ENCODE measurements at regions of chr22 and their contacts with region 1.

Region 1: DNA sequence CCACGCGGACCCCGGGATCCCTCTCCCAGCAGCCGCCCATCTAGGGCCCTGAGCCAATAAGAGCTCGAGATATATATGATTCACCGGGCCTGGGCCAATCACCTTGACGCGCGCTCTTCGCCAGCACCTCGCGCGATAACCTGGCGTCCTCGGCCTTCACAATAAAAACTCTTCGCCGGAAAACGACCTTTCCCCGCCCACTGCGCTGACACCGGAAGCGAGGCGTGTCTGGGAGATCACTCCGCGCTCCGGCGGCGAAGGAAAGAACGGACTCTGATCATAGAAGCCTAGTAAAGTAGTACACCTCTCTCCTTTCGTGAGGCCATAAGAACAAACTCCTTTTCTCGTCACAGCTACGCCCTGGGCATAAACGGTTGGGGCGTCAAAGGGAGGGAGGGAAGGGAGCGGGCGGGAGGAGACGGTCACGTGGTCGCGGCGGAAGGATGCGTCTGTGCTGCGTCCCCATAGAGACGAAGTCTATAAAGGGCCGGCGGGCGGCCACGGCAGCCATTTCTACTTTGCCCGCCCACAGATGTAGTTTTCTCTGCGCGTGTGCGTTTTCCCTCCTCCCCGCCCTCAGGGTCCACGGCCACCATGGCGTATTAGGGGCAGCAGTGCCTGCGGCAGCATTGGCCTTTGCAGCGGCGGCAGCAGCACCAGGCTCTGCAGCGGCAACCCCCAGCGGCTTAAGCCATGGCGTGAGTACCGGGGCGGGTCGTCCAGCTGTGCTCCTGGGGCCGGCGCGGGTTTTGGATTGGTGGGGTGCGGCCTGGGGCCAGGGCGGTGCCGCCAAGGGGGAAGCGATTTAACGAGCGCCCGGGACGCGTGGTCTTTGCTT is at the start of gene ATF4:
- DNase-seq: peak; percentile 99
- ATAC-seq: peak; percentile 89
- H3K4me3 Mint-ChIP-seq: peak within 1 kb of the TSS; percentile 89
- H3K27ac Mint-ChIP-seq: peak within 1 kb of the TSS; percentile 98
- H3K4me1 Mint-ChIP-seq: peaks cover 57% of the 10 kb centered on the region
- H3K27me3 Mint-ChIP-seq: no peaks in the 10 kb centered on the region
- CTCF ChIP-seq: no peak
- total RNA-seq, gene ATF4: 518 to 536 TPM

Region 2: DNA sequence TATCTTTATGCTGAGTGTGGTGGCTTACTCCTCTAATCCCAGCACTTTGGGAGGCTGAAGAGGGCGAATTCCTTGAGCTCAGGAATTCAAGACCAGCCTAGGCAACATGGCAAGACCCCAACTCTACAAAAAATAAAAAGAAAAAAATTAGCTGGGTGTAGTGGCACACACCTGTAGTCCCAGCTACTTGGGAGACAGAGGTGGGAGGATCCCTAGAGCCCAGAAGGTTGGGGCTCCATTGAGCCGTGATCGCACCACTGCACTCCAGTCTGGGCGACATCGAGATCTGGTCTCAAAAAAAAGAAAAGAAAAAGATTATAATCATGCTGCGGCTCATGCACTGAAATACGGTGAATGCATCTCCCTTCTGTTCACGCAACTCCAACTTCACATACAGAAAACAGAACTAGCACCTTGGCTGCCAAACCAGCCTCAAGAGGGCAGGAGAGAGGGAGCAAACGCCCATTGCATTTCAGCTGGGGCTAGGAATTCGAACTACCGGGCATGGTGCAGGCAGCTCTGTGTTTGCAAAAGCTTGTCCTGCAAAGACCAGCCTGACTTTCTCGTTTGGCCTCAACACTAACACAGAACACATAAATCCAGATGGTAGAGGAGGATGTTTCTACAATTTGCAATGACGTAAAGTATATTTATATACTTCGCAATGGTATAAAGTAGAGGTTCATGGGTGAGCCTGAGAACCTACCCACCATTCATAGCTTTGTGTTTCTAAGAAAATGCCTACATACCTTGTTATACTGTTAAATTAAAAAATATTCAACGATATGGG is 176.8 kb before region 1 on chr22:
- CTCF ChIA-PET with region 1: no interaction called
- POLR2A ChIA-PET with region 1: no interaction called
- intact Hi-C with region 1: no loop called
- DNase-seq: peak; percentile 69
- ATAC-seq: peak; percentile 77
- H3K4me3 Mint-ChIP-seq: no peak overlapping the region
- H3K27ac Mint-ChIP-seq: no peak overlapping the region
- H3K4me1 Mint-ChIP-seq: peaks cover 4% of the 10 kb centered on the region
- H3K27me3 Mint-ChIP-seq: peaks cover 8% of the 10 kb centered on the region
- CTCF ChIP-seq: peak; percentile 72

Region 3: GRCh38 chr22:39490135-39490798 is 30.0 kb before region 1 on chr22:
- CTCF ChIA-PET with region 1: interaction called, 323 read pairs
- POLR2A ChIA-PET with region 1: interaction called, 28 read pairs
- intact Hi-C with region 1: no loop called
- DNase-seq: peak; percentile 92
- ATAC-seq: peak; percentile 99
- H3K4me3 Mint-ChIP-seq: peak overlapping the region; percentile 4
- H3K27ac Mint-ChIP-seq: no peak overlapping the region
- H3K4me1 Mint-ChIP-seq: peaks cover 12% of the 10 kb centered on the region
- H3K27me3 Mint-ChIP-seq: no peaks in the 10 kb centered on the region
- CTCF ChIP-seq: no peak

Region 4: DNA sequence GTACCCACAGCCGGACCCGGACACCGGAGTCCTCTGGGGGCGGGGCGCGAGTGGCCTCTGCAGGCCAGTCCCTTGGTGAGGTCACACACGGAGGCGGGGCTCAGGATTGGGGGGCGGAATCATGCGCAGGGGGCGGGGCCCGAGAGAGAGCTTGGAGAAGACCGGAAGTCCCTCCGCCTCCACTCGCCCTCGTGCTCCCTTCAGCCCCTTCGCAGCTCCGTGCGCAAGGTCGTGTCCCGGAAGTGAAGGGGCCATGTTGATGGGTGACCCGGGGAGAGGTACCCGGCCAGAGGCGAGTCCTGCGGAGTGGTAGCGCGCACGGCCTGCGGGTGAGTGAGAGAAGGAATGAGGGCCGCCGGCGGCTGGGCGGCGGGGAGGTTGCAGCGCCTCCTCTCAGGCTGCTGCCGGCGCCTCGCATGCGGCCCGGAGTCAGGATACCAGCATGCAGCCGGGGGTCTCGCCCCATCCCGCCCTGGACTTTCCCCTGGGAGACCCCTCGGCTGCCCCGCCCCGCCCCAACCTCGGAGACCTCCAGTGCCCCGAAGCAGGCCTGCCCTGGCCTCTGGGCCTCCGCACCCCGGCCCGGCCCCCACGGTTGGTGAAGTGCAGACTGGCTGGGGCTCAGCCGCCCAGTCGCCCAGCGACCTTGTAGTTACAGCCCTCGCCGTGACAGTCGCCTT is 18.0 kb before region 1 on chr22 and contains the start of gene MIEF1:
- CTCF ChIA-PET with region 1: interaction called, 323 read pairs
- POLR2A ChIA-PET with region 1: interaction called, 234 read pairs
- intact Hi-C with region 1: loop called (anchors 2 kb)
- DNase-seq: peak; percentile 98
- ATAC-seq: peak; percentile 99
- H3K4me3 Mint-ChIP-seq: peak within 1 kb of the TSS; percentile 80
- H3K27ac Mint-ChIP-seq: peak within 1 kb of the TSS; percentile 93
- H3K4me1 Mint-ChIP-seq: peaks cover 32% of the 10 kb centered on the region
- H3K27me3 Mint-ChIP-seq: no peaks in the 10 kb centered on the region
- CTCF ChIP-seq: no peak
- total RNA-seq, gene MIEF1: 48.2 to 51.1 TPM

Region 5: GRCh38 chr22:39508393-39508792 is 11.9 kb before region 1 on chr22:
- CTCF ChIA-PET with region 1: interaction called, 323 read pairs
- POLR2A ChIA-PET with region 1: interaction called, 234 read pairs
- intact Hi-C with region 1: loop called (anchors 2 kb)
- DNase-seq: no peak
- ATAC-seq: no peak
- H3K4me3 Mint-ChIP-seq: no peak overlapping the region
- H3K27ac Mint-ChIP-seq: peak overlapping the region; percentile 68
- H3K4me1 Mint-ChIP-seq: peaks cover 42% of the 10 kb centered on the region
- H3K27me3 Mint-ChIP-seq: no peaks in the 10 kb centered on the region
- CTCF ChIP-seq: no peak

Region 6: GRCh38 chr22:39598017-39598965 is 78.0 kb after region 1 on chr22:
- CTCF ChIA-PET with region 1: no interaction called
- POLR2A ChIA-PET with region 1: no interaction called
- intact Hi-C with region 1: no loop called
- DNase-seq: peak; percentile 89
- ATAC-seq: peak; percentile 85
- H3K4me3 Mint-ChIP-seq: no peak overlapping the region
- H3K27ac Mint-ChIP-seq: no peak overlapping the region
- H3K4me1 Mint-ChIP-seq: peaks cover 28% of the 10 kb centered on the region
- H3K27me3 Mint-ChIP-seq: peaks cover 13% of the 10 kb centered on the region
- CTCF ChIP-seq: no peak

Measured in activated CD8-positive, alpha-beta T cell treated with anti-CD3 and anti-CD28 coated beads for 36 hours (primary cell).